IMR-90 (cell line): ENCODE measurements at regions of chr16 and their contacts with region 1.

Region 1: DNA sequence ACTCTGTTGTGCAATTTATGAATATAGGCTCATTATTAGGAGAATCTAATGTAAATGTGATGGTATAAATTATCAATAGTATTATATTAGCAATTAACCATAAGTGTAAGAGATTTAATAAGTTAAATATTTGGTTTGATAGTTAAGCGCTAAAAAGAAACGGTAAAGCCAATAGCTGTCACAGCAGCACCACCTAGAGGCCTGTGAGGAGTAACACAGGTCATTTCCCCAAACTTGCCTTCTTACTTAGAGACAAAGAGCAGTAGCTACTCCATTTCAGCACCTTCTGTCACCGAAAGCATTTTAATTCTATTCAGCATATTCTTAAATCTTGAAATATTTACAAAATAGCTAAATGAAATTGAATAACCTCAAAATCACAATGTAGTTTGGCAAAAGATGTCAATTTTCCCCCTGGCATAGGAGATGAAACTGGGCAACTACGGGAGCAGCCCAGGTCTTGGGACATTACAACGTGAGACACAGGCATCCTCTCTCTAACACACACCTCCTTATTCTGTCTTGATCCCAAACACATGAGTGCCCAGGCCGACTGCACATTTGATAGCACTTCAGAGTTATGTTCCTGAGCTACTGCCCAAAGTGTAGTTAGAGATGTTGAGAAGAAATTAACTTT is 14.2 kb upstream of the DYNLRB2 start:
- DNase-seq: peak; percentile 55
- ATAC-seq: peak; percentile 88
- H3K4me3 ChIP-seq: no peak overlapping the region
- H3K27ac ChIP-seq: no peak overlapping the region
- H3K4me1 ChIP-seq: no peaks in the 10 kb centered on the region
- H3K27me3 ChIP-seq: no peaks in the 10 kb centered on the region
- CTCF ChIP-seq: peak; percentile 82
- POLR2A ChIP-seq: no peak
- RAD21 ChIP-seq: peak; percentile 84

Region 2: GRCh38 chr16:80824718-80825364 is 298.3 kb after region 1 on chr16:
- CTCF ChIA-PET with region 1: interaction called, 7 read pairs
- POLR2A ChIA-PET with region 1: no interaction called
- dilution Hi-C with region 1: no loop called
- in situ Hi-C with region 1: loop called (anchors 25 kb)
- intact Hi-C with region 1: loop called (anchors 5 kb)
- DNase-seq: peak; percentile 67
- ATAC-seq: peak; percentile 44; the same call in 1 of the 2 replicates
- H3K4me3 ChIP-seq: no peak overlapping the region
- H3K27ac ChIP-seq: no peak overlapping the region
- H3K4me1 ChIP-seq: no peaks in the 10 kb centered on the region
- H3K27me3 ChIP-seq: no peaks in the 10 kb centered on the region; the same call in 1 of the 2 replicates
- CTCF ChIP-seq: peak; percentile 73
- POLR2A ChIP-seq: no peak
- RAD21 ChIP-seq: peak; percentile 65